Activated T-helper 2 cell treated with anti-CD3 and anti-CD28 coated beads, Interferon-gamma antibody, Interleukin-2, Interleukin-4, amounts not matched to agents 10 μg/mL and 5 μg/mL and 100 μg/mL, durations not matched to agents 14 hours and 24 hours and 36 hours (primary cell): ENCODE measurements at regions of chr10 and their contacts with region 1.

Region 1: GRCh38 chr10:62637249-62638061 is 167.1 kb upstream of the ADO start:
- DNase-seq: peak; percentile 75
- H3K4me3 Mint-ChIP-seq: no peak overlapping the region
- H3K27ac Mint-ChIP-seq: no peak overlapping the region
- H3K4me1 Mint-ChIP-seq: peaks cover 37% of the 10 kb centered on the region
- H3K27me3 Mint-ChIP-seq: no peaks in the 10 kb centered on the region

Region 2: DNA sequence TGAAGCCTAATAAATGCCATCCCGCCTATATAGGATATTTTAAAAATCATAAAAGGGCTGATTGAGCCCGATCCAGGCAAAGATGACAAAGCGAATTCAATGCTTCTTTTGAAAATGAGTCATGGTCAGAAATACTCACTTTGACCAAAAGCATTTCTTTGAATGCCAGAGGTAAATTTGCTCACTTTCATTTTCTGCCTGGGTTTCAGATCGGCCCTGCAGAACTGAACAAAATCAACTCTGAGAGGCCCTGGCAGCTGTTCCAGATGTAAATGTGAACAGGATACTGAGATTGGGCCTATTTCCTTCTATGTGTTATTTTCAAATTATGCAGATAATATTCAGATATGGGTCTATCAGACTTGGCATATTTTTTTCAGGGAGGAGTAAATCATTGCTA is 850.7 kb before region 1 on chr10:
- intact Hi-C with region 1: loop called (anchors 10 kb)
- DNase-seq: no peak
- H3K4me3 Mint-ChIP-seq: no peak overlapping the region
- H3K27ac Mint-ChIP-seq: no peak overlapping the region
- H3K4me1 Mint-ChIP-seq: peaks cover 56% of the 10 kb centered on the region
- H3K27me3 Mint-ChIP-seq: no peaks in the 10 kb centered on the region

Region 3: GRCh38 chr10:62610649-62611229 is 26.7 kb before region 1 on chr10:
- intact Hi-C with region 1: loop called (anchors 1 kb)
- DNase-seq: peak; percentile 58
- H3K4me3 Mint-ChIP-seq: no peak overlapping the region
- H3K27ac Mint-ChIP-seq: no peak overlapping the region
- H3K4me1 Mint-ChIP-seq: peaks cover 52% of the 10 kb centered on the region
- H3K27me3 Mint-ChIP-seq: peaks cover 5% of the 10 kb centered on the region

Region 4: DNA sequence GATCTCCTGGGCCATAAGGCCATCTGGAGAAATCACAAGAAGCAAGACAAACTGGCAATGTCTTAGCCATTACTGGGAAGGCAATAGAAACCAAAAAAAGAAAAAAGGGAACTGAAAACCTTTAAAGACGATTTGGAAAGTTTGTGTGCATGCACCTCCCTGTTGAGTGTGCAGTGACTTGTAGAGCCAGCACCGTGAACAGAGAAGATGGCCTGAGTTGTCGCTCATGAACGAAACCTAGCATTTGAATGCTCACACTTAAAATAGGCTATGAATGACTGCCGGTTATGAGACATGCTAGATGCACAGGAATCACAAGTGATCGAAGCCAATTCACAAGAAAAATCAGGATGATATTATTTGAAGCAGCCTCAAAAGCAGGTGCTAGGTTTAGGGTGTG is 15.8 kb after region 1 on chr10:
- intact Hi-C with region 1: loop called (anchors 1 kb)
- DNase-seq: no peak
- H3K4me3 Mint-ChIP-seq: no peak overlapping the region
- H3K27ac Mint-ChIP-seq: no peak overlapping the region
- H3K4me1 Mint-ChIP-seq: peaks cover 42% of the 10 kb centered on the region
- H3K27me3 Mint-ChIP-seq: no peaks in the 10 kb centered on the region

Region 5: DNA sequence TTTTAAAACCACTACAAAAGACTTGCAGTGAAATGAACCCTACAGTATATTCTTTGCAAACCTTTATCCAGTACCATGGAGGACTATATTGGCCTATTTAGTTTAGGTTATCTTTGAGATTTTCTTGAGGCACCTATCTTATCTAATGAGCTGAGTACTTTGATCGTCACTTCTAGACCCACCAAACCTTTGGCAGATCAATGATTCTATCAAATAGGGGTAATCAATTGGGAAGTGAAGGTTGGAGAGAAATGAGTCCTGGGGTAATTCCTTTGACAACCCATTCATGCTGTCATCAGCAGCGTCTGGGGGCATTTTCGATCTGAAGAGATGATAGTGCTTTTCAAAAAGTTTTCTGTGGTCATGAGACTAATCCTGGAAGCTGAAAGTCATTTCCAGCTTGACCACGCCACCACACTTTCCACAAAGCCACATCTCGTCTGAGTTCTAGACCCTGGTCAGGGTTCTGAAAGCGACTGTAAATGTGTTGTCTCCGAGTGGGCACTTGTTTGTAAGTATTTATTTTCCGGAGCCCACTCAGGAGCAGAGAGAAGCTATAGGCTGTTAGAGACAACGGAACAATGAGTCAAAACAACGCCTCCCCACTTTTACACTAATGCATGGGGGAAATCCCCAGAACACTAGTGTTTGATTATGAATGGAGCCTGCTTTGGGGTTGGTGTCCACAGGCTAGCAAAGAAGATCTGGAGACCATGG is 173.9 kb after region 1 on chr10:
- intact Hi-C with region 1: loop called (anchors 1 kb)
- DNase-seq: peak; percentile 58
- H3K4me3 Mint-ChIP-seq: peak overlapping the region; percentile 97
- H3K27ac Mint-ChIP-seq: peak overlapping the region; percentile 83
- H3K4me1 Mint-ChIP-seq: peaks cover 67% of the 10 kb centered on the region
- H3K27me3 Mint-ChIP-seq: peaks cover 2% of the 10 kb centered on the region